BJ (cell line): ENCODE measurements at regions of chr10 and their contacts with region 1.

Region 1: DNA sequence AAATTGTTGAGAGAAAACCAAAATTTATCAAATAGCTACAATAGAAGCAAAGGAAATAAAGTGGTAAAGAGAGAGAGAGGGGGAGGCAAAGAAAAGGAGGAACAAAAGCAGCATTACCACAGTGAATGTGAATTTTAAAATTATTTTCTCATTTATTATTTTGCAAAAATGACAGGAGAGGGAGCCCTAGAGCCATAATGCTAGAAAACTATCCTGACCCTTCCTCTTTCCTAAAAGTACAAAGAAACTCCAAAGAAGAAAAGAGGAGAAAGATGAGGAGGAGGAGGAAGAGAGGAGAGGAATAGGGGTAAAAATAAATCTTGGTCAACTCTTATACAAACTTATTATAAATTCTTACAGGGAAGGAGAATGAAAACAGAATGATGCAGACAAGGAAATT is 921.5 kb downstream of the NRG3 start:
- DNase-seq: no peak
- H3K4me3 ChIP-seq: no peak overlapping the region
- H3K27me3 ChIP-seq: no peaks in the 10 kb centered on the region
- CTCF ChIP-seq: peak; percentile 44

Region 2: GRCh38 chr10:83871187-83872081 is 1074.9 kb after region 1 on chr10:
- CTCF ChIA-PET with region 1: interaction called, 26 read pairs
- POLR2A ChIA-PET with region 1: no interaction called
- DNase-seq: no peak
- H3K4me3 ChIP-seq: no peak overlapping the region
- H3K27me3 ChIP-seq: no peaks in the 10 kb centered on the region
- CTCF ChIP-seq: peak; percentile 96